ENCODE measurements at regions of chr15 and their contacts with region 1.

Region 1: GRCh38 chr15:78314181-78314581 is 14.8 kb upstream of the SKIC8 start:
- DNase-seq: no peak
- H3K4me3 ChIP-seq: no peak overlapping the region
- H3K27ac ChIP-seq: no peak overlapping the region
- H3K4me1 ChIP-seq: no peaks in the 10 kb centered on the region
- H3K27me3 ChIP-seq: no peaks in the 10 kb centered on the region
- CTCF ChIP-seq: no peak

Region 2: GRCh38 chr15:78284758-78285157 is 29.4 kb before region 1 on chr15:
- CTCF ChIA-PET with region 1: no interaction called
- dilution Hi-C with region 1: no loop called
- in situ Hi-C with region 1: no loop called
- intact Hi-C with region 1: no loop called
- DNase-seq: no peak
- H3K4me3 ChIP-seq: no peak overlapping the region
- H3K27ac ChIP-seq: no peak overlapping the region
- H3K4me1 ChIP-seq: no peaks in the 10 kb centered on the region
- H3K27me3 ChIP-seq: no peaks in the 10 kb centered on the region
- CTCF ChIP-seq: no peak

Region 3: GRCh38 chr15:78429477-78429876 is 115.3 kb after region 1 on chr15:
- CTCF ChIA-PET with region 1: no interaction called
- dilution Hi-C with region 1: no loop called
- in situ Hi-C with region 1: loop called in 1 of 2 experiments (anchors 5 kb)
- intact Hi-C with region 1: no loop called
- DNase-seq: no peak
- H3K4me3 ChIP-seq: no peak overlapping the region
- H3K27ac ChIP-seq: no peak overlapping the region
- H3K4me1 ChIP-seq: no peaks in the 10 kb centered on the region
- H3K27me3 ChIP-seq: peaks cover 2% of the 10 kb centered on the region
- CTCF ChIP-seq: no peak